Vagina (tissue), 2 donors: ENCODE measurements at regions of chr12 and their contacts with region 1.

Region 1: GRCh38 chr12:107344035-107344808 is 250.9 kb upstream of the CRY1 start:
- DNase-seq: no peak
- H3K4me3 ChIP-seq: no peak overlapping the region
- H3K27ac ChIP-seq: no peak overlapping the region
- H3K4me1 ChIP-seq: peaks cover 7% of the 10 kb centered on the region
- H3K27me3 ChIP-seq: no peaks in the 10 kb centered on the region
- CTCF ChIP-seq: no peak
- POLR2A ChIP-seq: no peak

Region 2: GRCh38 chr12:107330831-107331431 is 13.3 kb before region 1 on chr12:
- intact Hi-C with region 1: loop called (anchors 1 kb)
- DNase-seq: no peak
- H3K4me3 ChIP-seq: no peak overlapping the region
- H3K27ac ChIP-seq: no peak overlapping the region
- H3K4me1 ChIP-seq: no peaks in the 10 kb centered on the region
- H3K27me3 ChIP-seq: no peaks in the 10 kb centered on the region
- CTCF ChIP-seq: no peak
- POLR2A ChIP-seq: no peak